Activated CD8-positive, alpha-beta T cell treated with anti-CD3 and anti-CD28 coated beads, Interleukin-2, amount 10 ng/mL, durations not matched to agents 7 days and 5 days (primary cell): ENCODE measurements at regions of chr11 and their contacts with region 1.

Region 1: GRCh38 chr11:64000026-64000739 is 13.9 kb downstream of the OTUB1 start:
- DNase-seq: peak; percentile 76
- ATAC-seq: peak; percentile 85
- H3K4me3 Mint-ChIP-seq: no peak overlapping the region
- H3K27ac Mint-ChIP-seq: no peak overlapping the region
- H3K4me1 Mint-ChIP-seq: peaks cover 26% of the 10 kb centered on the region
- H3K27me3 Mint-ChIP-seq: no peaks in the 10 kb centered on the region

Region 2: DNA sequence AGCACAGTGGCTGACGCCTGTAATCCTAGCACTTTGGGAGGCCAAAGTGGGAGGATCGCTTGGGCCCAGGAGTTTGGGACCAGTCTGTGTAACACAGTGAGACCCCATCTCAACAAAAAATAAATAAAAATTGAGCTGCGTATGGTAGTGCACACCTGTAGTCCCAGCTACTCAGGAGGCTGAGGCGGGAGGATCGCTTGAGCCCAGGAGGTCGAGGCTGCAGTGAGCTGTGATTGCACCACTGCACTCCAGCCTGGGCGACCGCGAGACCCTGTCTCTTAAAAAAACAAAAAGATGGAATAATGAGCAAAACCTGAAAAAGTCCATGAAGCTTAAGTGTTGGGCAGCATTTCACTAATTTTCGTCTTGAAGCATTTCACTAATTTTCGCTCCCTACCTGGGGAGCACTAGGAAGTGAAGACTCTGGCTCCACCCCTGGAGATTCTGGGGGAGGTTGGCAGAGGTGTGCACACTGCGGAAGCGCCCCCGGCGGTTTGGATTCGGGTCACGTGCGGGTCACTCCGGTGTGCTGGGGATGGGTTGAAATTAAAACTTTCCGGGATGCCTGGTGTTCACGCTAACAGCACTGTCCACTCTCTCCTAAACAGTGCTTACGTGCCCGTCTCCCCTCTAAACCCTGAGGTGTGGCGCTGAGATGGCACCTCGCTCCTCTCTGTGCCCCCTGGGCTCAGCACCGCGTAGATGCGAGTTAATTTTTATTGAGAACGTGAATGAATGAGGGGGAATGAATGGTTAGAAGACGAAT is 62.3 kb before region 1 on chr11:
- CTCF ChIA-PET with region 1: no interaction called
- POLR2A ChIA-PET with region 1: no interaction called
- DNase-seq: peak; percentile 54
- ATAC-seq: peak; percentile 35
- H3K4me3 Mint-ChIP-seq: peak overlapping the region; percentile 85
- H3K27ac Mint-ChIP-seq: peak overlapping the region; percentile 89
- H3K4me1 Mint-ChIP-seq: peaks cover 27% of the 10 kb centered on the region
- H3K27me3 Mint-ChIP-seq: peaks cover 2% of the 10 kb centered on the region

Region 3: GRCh38 chr11:63986156-63986931 is 13.8 kb before region 1 on chr11 and contains the start of gene OTUB1:
- CTCF ChIA-PET with region 1: interaction called, 13 read pairs
- POLR2A ChIA-PET with region 1: interaction called, 6 read pairs
- DNase-seq: peak; percentile 93
- ATAC-seq: peak; percentile 85
- H3K4me3 Mint-ChIP-seq: peak within 1 kb of the TSS; percentile 98
- H3K27ac Mint-ChIP-seq: peak within 1 kb of the TSS; percentile 94
- H3K4me1 Mint-ChIP-seq: peaks cover 34% of the 10 kb centered on the region
- H3K27me3 Mint-ChIP-seq: no peaks in the 10 kb centered on the region
- total RNA-seq, gene OTUB1: 93.7 to 102 TPM

Region 4: DNA sequence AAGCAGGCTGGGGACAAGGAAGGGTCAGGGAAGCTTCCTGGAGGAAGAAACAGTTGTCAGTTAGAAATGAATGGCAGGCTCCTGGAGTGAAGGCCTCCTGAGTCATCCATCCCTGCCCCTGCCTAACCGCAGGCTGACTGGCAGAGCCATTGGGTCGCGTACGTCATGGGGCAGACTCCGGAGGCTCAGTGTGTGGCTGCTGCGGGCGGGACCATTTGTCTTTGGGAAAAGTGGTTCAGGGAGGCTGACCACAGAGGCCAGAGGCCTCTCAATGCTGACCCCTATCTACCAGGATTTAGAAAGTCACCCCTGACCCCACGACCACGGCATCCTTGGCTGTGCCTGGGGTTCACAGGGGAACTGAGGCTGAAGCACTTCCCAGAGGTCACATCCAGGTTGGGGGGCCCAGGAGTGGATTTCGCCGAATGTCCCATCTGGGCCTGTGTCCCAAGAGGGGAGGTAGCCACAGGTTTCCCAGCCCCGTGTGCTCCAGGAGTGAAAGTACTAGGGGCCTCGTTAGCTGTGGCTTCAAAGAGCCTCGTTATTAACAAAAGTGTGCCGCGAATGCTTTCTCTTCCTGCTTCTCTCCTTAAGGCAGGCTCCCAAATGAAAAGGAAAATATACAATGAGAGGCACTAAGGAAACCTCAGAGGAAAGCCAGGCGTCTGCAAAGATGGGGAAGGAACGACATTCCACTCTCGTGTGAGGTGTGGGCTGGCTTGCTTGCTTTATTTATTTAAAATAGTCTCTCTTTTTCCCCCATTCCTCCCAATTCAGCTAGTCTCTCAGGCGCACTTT is 94.5 kb after region 1 on chr11:
- CTCF ChIA-PET with region 1: no interaction called
- POLR2A ChIA-PET with region 1: no interaction called
- DNase-seq: no peak
- ATAC-seq: no peak
- H3K4me3 Mint-ChIP-seq: no peak overlapping the region
- H3K27ac Mint-ChIP-seq: no peak overlapping the region
- H3K4me1 Mint-ChIP-seq: peaks cover 11% of the 10 kb centered on the region
- H3K27me3 Mint-ChIP-seq: no peaks in the 10 kb centered on the region